ENCODE measurements at regions of chr10 and their contacts with region 1.

Region 1: GRCh38 chr10:60099998-60100747 is 193.8 kb upstream of the CCDC6 start:
- DNase-seq: no peak
- ATAC-seq: peak; percentile 86
- H3K4me3 ChIP-seq: no peak overlapping the region
- H3K27ac ChIP-seq: no peak overlapping the region
- H3K4me1 ChIP-seq: peaks cover 2 to 4% of the 10 kb centered on the region in 2 donors
- H3K27me3 ChIP-seq: no peaks in the 10 kb centered on the region

Region 2: GRCh38 chr10:60182691-60183090 is 82.5 kb after region 1 on chr10:
- intact Hi-C with region 1: no loop called
- DNase-seq: no peak
- ATAC-seq: peak; percentile 34
- H3K4me3 ChIP-seq: no peak overlapping the region
- H3K27ac ChIP-seq: peak overlapping the region; percentile 28 to 83
- H3K4me1 ChIP-seq: peaks cover 3 to 4% of the 10 kb centered on the region in 2 donors
- H3K27me3 ChIP-seq: no peaks in the 10 kb centered on the region

Region 3: GRCh38 chr10:60208676-60209269 is 108.6 kb after region 1 on chr10:
- intact Hi-C with region 1: loop called (anchors 1 to 2 kb)
- DNase-seq: no peak
- ATAC-seq: no peak
- H3K4me3 ChIP-seq: no peak overlapping the region
- H3K27ac ChIP-seq: no peak overlapping the region
- H3K4me1 ChIP-seq: peaks cover 0 to 3% of the 10 kb centered on the region in 2 donors
- H3K27me3 ChIP-seq: no peaks in the 10 kb centered on the region

Region 4: GRCh38 chr10:60646966-60647796 is 547.0 kb after region 1 on chr10:
- intact Hi-C with region 1: loop called (anchors 10 kb)
- DNase-seq: no peak
- ATAC-seq: no peak
- H3K4me3 ChIP-seq: no peak overlapping the region
- H3K27ac ChIP-seq: no peak overlapping the region
- H3K4me1 ChIP-seq: no peaks in the 10 kb centered on the region
- H3K27me3 ChIP-seq: no peaks in the 10 kb centered on the region

Region 5: DNA sequence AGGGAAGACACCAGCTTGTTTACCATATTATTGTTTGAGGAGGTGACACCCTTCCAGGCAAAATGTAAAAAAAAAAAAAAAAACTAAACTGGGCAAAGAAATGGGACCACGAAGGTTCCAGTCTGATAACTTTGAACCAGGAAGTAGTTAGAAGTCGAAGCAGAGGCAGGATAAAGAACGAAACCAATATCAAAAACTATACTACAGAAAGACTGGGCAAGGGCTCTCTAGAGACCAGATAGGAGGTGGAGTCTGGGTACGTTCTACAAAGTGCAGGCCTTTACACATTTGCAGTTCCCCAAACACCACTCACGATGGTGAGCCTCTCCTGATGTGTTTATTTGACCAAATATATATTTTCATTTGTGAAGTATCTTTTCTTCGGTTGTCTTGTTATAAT is 552.5 kb after region 1 on chr10:
- intact Hi-C with region 1: loop called (anchors 10 kb)
- DNase-seq: no peak
- ATAC-seq: no peak
- H3K4me3 ChIP-seq: no peak overlapping the region
- H3K27ac ChIP-seq: no peak overlapping the region
- H3K4me1 ChIP-seq: no peaks in the 10 kb centered on the region
- H3K27me3 ChIP-seq: no peaks in the 10 kb centered on the region